CD4-positive, alpha-beta memory T cell (primary cell): ENCODE measurements at regions of chr12 and their contacts with region 1.

Region 1: DNA sequence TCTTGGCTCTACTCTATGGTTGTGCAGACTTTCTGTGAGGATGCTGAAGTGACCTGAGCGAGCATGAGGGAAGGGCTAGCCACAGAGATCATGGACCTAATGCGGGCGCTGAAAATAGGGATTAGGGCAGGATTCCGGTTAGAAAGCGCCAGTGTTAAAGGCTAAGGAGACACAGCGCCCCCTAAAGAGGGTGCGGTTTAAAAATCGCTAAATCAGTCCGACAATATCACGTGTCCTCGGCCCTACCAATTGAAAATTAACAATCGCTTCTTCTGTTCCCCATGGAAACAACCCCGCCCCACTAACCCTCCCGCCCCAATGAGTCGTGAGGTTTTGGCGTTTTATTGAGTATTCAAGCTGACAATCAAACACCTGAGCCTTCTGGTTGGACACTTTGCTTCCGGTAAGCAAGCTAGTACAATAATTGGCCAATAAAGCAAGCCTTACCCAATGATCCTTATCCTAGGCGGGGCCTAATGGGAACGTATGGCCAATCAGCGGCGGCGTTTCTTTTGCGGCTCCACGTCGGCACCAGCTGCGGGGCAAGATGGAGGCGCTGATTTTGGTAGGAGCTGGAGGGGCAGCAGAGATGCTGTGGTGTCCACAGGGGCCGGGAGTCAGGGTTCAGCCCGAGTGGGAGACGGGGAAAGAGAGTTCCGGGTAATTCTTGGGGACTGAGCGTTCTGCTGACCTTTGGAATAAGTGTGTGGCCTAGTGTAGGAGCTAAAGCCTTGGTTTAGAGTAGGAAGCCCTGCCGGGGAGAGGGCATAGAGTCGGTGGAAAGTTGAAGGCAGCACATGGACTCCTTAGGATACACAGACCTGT is at the start of gene COPZ1:
- DNase-seq: peak; percentile 93 to 99 (median 95)
- H3K4me3 ChIP-seq: peak within 1 kb of the TSS; percentile 92 to 93
- H3K4me3 Mint-ChIP-seq: peak within 1 kb of the TSS; percentile 94 to 100 (median 98)
- H3K27ac ChIP-seq: peak within 1 kb of the TSS; percentile 86
- H3K27ac Mint-ChIP-seq: peak within 1 kb of the TSS; percentile 93 to 99 (median 98)
- H3K4me1 ChIP-seq: peaks cover 44% of the 10 kb centered on the region
- H3K4me1 Mint-ChIP-seq: peaks cover 28 to 47% (median 38%) of the 10 kb centered on the region in 4 donors
- H3K27me3 ChIP-seq: no peaks in the 10 kb centered on the region
- H3K27me3 Mint-ChIP-seq: no peaks in the 10 kb centered on the region
- total RNA-seq, gene COPZ1: 81.6 to 92.0 TPM

Region 2: DNA sequence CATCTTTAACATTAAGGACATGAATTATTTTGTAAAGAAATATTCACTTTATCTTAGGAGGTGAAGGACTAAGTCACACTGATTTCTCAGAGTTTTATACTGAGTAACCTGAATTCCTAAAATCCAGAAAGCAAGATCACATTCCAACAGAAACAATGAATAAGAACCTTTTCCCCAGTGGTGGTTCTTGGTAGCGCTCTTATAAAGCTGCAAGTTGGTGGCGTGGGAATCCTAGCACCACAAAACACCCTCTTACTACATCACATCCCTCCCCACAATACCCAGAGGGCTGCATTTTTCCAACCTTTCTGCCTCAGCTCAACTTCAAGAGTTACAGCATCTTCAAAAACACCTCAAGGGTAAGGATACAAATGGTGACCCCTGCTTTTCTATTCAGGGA is 92.0 kb before region 1 on chr12:
- CTCF ChIA-PET with region 1: no interaction called
- POLR2A ChIA-PET with region 1: no interaction called
- intact Hi-C with region 1: no loop called
- DNase-seq: no peak
- H3K4me3 ChIP-seq: no peak overlapping the region
- H3K4me3 Mint-ChIP-seq: no peak overlapping the region
- H3K27ac ChIP-seq: no peak overlapping the region
- H3K27ac Mint-ChIP-seq: no peak overlapping the region
- H3K4me1 ChIP-seq: no peaks in the 10 kb centered on the region
- H3K4me1 Mint-ChIP-seq: peaks cover 0 to 3% (median 1%) of the 10 kb centered on the region in 4 donors
- H3K27me3 ChIP-seq: no peaks in the 10 kb centered on the region
- H3K27me3 Mint-ChIP-seq: no peaks in the 10 kb centered on the region

Region 3: GRCh38 chr12:54251667-54252284 is 73.1 kb before region 1 on chr12:
- CTCF ChIA-PET with region 1: interaction called, 7 read pairs
- POLR2A ChIA-PET with region 1: interaction called, 4 read pairs
- intact Hi-C with region 1: loop called (anchors 1 kb)
- DNase-seq: peak in 4 of 5 donors; percentile 36 to 52 (median 46)
- H3K4me3 ChIP-seq: no peak overlapping the region
- H3K4me3 Mint-ChIP-seq: no peak overlapping the region
- H3K27ac ChIP-seq: no peak overlapping the region
- H3K27ac Mint-ChIP-seq: peak overlapping the region in 1 of 7 donors; percentile 63
- H3K4me1 ChIP-seq: no peaks in the 10 kb centered on the region
- H3K4me1 Mint-ChIP-seq: peaks cover 4 to 9% (median 6%) of the 10 kb centered on the region in 4 donors
- H3K27me3 ChIP-seq: no peaks in the 10 kb centered on the region
- H3K27me3 Mint-ChIP-seq: no peaks in the 10 kb centered on the region

Region 4: GRCh38 chr12:54300732-54301427 is 23.9 kb before region 1 on chr12 and contains the start of gene NFE2:
- CTCF ChIA-PET with region 1: interaction called, 12 read pairs
- POLR2A ChIA-PET with region 1: interaction called, 12 read pairs
- intact Hi-C with region 1: no loop called
- DNase-seq: peak in 1 of 5 donors; percentile 37
- H3K4me3 ChIP-seq: no peak within 1 kb of the TSS
- H3K4me3 Mint-ChIP-seq: peak within 1 kb of the TSS in 7 of 8 donors; percentile 24 to 69 (median 45)
- H3K27ac ChIP-seq: no peak within 1 kb of the TSS
- H3K27ac Mint-ChIP-seq: no peak within 1 kb of the TSS
- H3K4me1 ChIP-seq: peaks cover 27% of the 10 kb centered on the region
- H3K4me1 Mint-ChIP-seq: peaks cover 9 to 39% (median 22%) of the 10 kb centered on the region in 4 donors
- H3K27me3 ChIP-seq: peaks cover 19% of the 10 kb centered on the region
- H3K27me3 Mint-ChIP-seq: peaks cover 24 to 45% of the 10 kb centered on the region in 2 donors
- total RNA-seq, gene NFE2: not detected

Region 5: DNA sequence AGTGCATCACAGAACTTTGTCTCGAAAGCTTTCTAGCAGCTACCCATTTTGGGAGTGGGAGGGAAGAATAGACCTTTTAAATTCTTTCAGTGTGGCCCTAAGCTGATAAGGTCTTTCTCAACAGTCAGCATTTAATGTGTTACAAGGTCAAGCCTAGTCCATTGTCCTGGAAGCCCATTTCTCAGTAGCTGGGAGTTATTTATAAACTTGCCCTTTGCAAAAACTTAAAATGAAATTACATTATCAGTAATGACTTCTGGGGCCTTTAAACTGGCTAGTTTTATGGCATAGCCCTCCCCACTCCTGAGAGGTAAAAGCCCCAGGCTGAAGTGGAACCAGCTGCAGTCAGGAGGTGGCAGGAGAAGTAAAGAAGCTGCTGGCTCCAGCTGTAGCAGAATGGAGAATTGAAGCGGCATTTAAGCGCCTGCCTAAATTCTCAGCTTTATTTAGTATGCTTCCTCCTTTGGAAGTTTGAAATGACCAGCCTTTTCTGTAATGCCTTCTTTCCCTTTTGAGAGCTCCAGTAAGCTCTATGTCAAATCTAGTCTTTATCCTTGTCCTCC is 12.5 kb after region 1 on chr12:
- CTCF ChIA-PET with region 1: interaction called, 101 read pairs
- POLR2A ChIA-PET with region 1: interaction called, 12 read pairs
- intact Hi-C with region 1: no loop called
- DNase-seq: no peak
- H3K4me3 ChIP-seq: no peak overlapping the region
- H3K4me3 Mint-ChIP-seq: no peak overlapping the region
- H3K27ac ChIP-seq: no peak overlapping the region
- H3K27ac Mint-ChIP-seq: peak overlapping the region in 3 of 7 donors; percentile 48 to 51 (median 48)
- H3K4me1 ChIP-seq: peaks cover 4% of the 10 kb centered on the region
- H3K4me1 Mint-ChIP-seq: peaks cover 6 to 29% (median 15%) of the 10 kb centered on the region in 4 donors
- H3K27me3 ChIP-seq: no peaks in the 10 kb centered on the region
- H3K27me3 Mint-ChIP-seq: no peaks in the 10 kb centered on the region

Region 6: GRCh38 chr12:54352022-54352531 is 27.2 kb after region 1 on chr12:
- CTCF ChIA-PET with region 1: interaction called, 28 read pairs
- POLR2A ChIA-PET with region 1: interaction called, 45 read pairs
- intact Hi-C with region 1: no loop called
- DNase-seq: no peak
- H3K4me3 ChIP-seq: no peak overlapping the region
- H3K4me3 Mint-ChIP-seq: peak overlapping the region; percentile 72 to 85 (median 76)
- H3K27ac ChIP-seq: no peak overlapping the region
- H3K27ac Mint-ChIP-seq: peak overlapping the region in 6 of 7 donors; percentile 70 to 91 (median 76)
- H3K4me1 ChIP-seq: peaks cover 14% of the 10 kb centered on the region
- H3K4me1 Mint-ChIP-seq: peaks cover 11 to 18% (median 12%) of the 10 kb centered on the region in 4 donors
- H3K27me3 ChIP-seq: no peaks in the 10 kb centered on the region
- H3K27me3 Mint-ChIP-seq: no peaks in the 10 kb centered on the region

Region 7: GRCh38 chr12:54359033-54359761 is 34.4 kb after region 1 on chr12:
- CTCF ChIA-PET with region 1: interaction called, 28 read pairs
- POLR2A ChIA-PET with region 1: interaction called, 45 read pairs
- intact Hi-C with region 1: loop called (anchors 1 kb)
- DNase-seq: peak; percentile 93 to 99 (median 95)
- H3K4me3 ChIP-seq: peak overlapping the region; percentile 87 to 91
- H3K4me3 Mint-ChIP-seq: no peak overlapping the region
- H3K27ac ChIP-seq: peak overlapping the region; percentile 95
- H3K27ac Mint-ChIP-seq: no peak overlapping the region
- H3K4me1 ChIP-seq: peaks cover 36% of the 10 kb centered on the region
- H3K4me1 Mint-ChIP-seq: peaks cover 10 to 19% (median 14%) of the 10 kb centered on the region in 4 donors
- H3K27me3 ChIP-seq: no peaks in the 10 kb centered on the region
- H3K27me3 Mint-ChIP-seq: no peaks in the 10 kb centered on the region

Region 8: DNA sequence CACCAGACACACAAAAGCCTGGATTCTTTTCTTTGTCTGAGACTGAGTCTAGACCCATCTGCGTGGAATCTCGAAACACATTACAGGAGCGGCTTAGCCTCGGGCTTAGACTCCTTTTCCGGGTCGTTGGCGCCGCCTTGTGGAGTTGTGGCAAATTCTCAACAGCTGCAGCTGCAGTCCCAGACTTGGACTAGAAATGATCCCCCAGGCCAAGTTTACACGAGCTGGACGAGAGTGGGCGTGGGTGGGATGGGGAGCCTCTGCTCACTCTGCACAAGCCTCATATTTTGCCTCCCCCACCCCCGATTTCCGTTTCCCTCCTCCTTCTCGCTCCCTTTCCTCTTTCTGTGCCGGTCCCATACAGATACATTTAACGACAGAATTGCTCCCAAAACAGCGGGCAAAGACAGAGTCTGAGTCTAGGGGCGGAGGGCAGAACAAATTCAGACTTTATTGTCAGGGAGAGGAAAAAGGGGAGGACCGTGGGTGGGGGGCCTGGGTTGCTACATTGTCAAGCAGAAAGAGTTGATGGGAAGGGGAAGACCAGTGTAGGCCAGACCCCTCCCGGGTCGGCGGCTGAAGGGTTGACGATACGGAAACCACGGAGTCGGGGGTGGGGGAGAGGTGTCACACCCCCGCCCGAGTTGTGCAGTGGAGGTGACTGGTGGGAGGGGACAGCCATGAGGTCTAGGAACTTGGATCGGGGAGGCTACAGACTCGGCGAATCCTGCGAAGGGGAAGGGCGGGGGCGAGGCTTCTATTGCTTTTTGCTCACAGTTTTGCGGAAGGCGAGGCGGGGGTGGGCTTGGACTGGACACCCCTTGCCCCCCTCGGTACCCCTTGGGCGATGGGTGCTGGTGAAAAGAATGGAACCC is 44.1 kb after region 1 on chr12:
- CTCF ChIA-PET with region 1: interaction called, 7 read pairs
- POLR2A ChIA-PET with region 1: interaction called, 3 read pairs
- intact Hi-C with region 1: loop called (anchors 2 kb)
- DNase-seq: peak; percentile 81 to 88 (median 84)
- H3K4me3 ChIP-seq: peak overlapping the region in 1 of 2 donors; percentile 27
- H3K4me3 Mint-ChIP-seq: peak overlapping the region; percentile 63 to 90 (median 76)
- H3K27ac ChIP-seq: peak overlapping the region; percentile 37
- H3K27ac Mint-ChIP-seq: peak overlapping the region; percentile 30 to 86 (median 79)
- H3K4me1 ChIP-seq: peaks cover 33% of the 10 kb centered on the region
- H3K4me1 Mint-ChIP-seq: peaks cover 20 to 50% (median 31%) of the 10 kb centered on the region in 4 donors
- H3K27me3 ChIP-seq: no peaks in the 10 kb centered on the region
- H3K27me3 Mint-ChIP-seq: peaks cover 0 to 3% of the 10 kb centered on the region in 2 donors

Region 9: DNA sequence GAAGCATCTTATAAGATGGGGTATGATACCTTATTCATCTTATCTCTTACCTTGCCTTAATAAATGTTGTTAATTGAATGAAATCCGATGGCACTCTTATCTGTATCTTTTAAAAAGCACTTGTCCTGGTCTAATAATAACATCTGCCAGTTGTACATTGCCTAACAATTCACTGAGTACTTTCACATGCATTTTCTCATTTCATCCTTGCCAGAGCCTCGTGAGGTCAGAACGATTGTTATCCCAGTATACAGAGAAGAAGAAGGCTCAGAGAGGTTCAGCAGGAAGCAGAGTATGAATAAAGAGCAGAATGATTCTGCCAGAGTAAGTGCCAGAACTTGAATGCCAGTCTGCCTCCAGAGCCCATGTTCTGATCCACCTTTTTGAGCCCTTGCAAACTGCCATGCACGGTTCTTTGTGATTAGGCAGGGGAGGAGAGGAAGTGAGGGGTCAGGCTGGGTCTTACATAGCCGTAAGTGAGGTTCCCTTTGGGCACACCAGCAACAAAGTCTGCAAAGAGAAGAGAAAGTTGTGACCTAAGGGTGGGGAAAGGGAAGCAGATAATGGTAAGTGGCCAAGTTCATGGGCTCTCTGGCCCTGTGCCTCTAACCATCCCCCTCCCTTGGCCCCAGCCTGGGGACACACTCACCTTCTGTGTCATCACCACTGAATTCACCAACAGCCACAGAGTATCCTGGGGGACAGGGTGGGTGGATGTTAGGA is 82.5 kb after region 1 on chr12:
- CTCF ChIA-PET with region 1: no interaction called
- POLR2A ChIA-PET with region 1: no interaction called
- intact Hi-C with region 1: no loop called
- DNase-seq: peak in 1 of 5 donors; percentile 4
- H3K4me3 ChIP-seq: no peak overlapping the region
- H3K4me3 Mint-ChIP-seq: no peak overlapping the region
- H3K27ac ChIP-seq: peak overlapping the region; percentile 11
- H3K27ac Mint-ChIP-seq: peak overlapping the region; percentile 61 to 92 (median 80)
- H3K4me1 ChIP-seq: peaks cover 52% of the 10 kb centered on the region
- H3K4me1 Mint-ChIP-seq: peaks cover 27 to 70% (median 53%) of the 10 kb centered on the region in 4 donors
- H3K27me3 ChIP-seq: no peaks in the 10 kb centered on the region
- H3K27me3 Mint-ChIP-seq: no peaks in the 10 kb centered on the region

Region 10: GRCh38 chr12:54549774-54550451 is 225.1 kb after region 1 on chr12:
- CTCF ChIA-PET with region 1: no interaction called
- POLR2A ChIA-PET with region 1: no interaction called
- intact Hi-C with region 1: no loop called
- DNase-seq: no peak
- H3K4me3 ChIP-seq: peak overlapping the region in 1 of 2 donors; percentile 30
- H3K4me3 Mint-ChIP-seq: peak overlapping the region; percentile 80 to 95 (median 86)
- H3K27ac ChIP-seq: no peak overlapping the region
- H3K27ac Mint-ChIP-seq: peak overlapping the region in 5 of 7 donors; percentile 40 to 77 (median 49)
- H3K4me1 ChIP-seq: peaks cover 15% of the 10 kb centered on the region
- H3K4me1 Mint-ChIP-seq: peaks cover 7 to 35% (median 17%) of the 10 kb centered on the region in 4 donors
- H3K27me3 ChIP-seq: no peaks in the 10 kb centered on the region
- H3K27me3 Mint-ChIP-seq: peaks cover 0 to 2% of the 10 kb centered on the region in 2 donors